ENCODE measurements at regions of chr14 and their contacts with region 1.

Region 1: GRCh38 chr14:53432378-53432802 is 279.3 kb upstream of the DDHD1 start:
- DNase-seq: no peak
- ATAC-seq: peak; percentile 87
- H3K4me3 ChIP-seq: no peak overlapping the region
- H3K27ac ChIP-seq: no peak overlapping the region
- H3K4me1 ChIP-seq: no peaks in the 10 kb centered on the region
- H3K27me3 ChIP-seq: no peaks in the 10 kb centered on the region
- CTCF ChIP-seq: peak; percentile 63 to 70 (median 70)
- EP300 ChIP-seq: no peak
- POLR2A ChIP-seq: no peak
- RAD21 ChIP-seq: peak; percentile 87

Region 2: DNA sequence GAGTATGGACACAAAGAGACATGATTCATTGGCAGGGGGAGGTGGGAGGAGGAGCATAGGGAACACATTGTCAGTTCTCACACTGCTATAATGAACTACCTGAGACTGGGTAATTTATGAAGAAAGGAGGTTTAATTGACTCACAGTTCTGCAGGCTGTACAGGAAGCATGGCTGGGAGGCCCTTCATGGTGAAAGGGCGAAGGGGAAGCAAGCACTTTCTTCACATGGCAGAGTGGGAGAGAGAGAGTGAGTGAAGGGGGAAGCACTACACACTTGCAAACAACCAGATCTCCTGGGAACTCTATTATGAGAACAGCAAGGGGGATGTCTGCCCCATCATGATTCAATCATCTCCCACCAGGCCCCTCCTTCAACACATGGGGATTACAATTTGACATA is 132.5 kb after region 1 on chr14:
- CTCF ChIA-PET with region 1: no interaction called
- POLR2A ChIA-PET with region 1: no interaction called
- RAD21 ChIA-PET with region 1: no interaction called
- SMC1A ChIA-PET with region 1: no interaction called
- in situ Hi-C with region 1: no loop called
- intact Hi-C with region 1: no loop called
- DNase-seq: no peak
- ATAC-seq: peak; percentile 42; the same call in 2 of the 3 replicates
- H3K4me3 ChIP-seq: no peak overlapping the region
- H3K27ac ChIP-seq: no peak overlapping the region
- H3K4me1 ChIP-seq: no peaks in the 10 kb centered on the region
- H3K27me3 ChIP-seq: no peaks in the 10 kb centered on the region
- CTCF ChIP-seq: no peak
- EP300 ChIP-seq: no peak
- POLR2A ChIP-seq: no peak
- RAD21 ChIP-seq: no peak

Region 3: GRCh38 chr14:53793790-53794505 is 361.6 kb after region 1 on chr14:
- CTCF ChIA-PET with region 1: no interaction called
- POLR2A ChIA-PET with region 1: no interaction called
- RAD21 ChIA-PET with region 1: no interaction called
- SMC1A ChIA-PET with region 1: no interaction called
- in situ Hi-C with region 1: no loop called
- intact Hi-C with region 1: loop called (anchors 10 kb)
- DNase-seq: no peak
- ATAC-seq: no peak
- H3K4me3 ChIP-seq: no peak overlapping the region
- H3K27ac ChIP-seq: no peak overlapping the region
- H3K4me1 ChIP-seq: no peaks in the 10 kb centered on the region
- H3K27me3 ChIP-seq: no peaks in the 10 kb centered on the region
- CTCF ChIP-seq: no peak
- EP300 ChIP-seq: no peak
- POLR2A ChIP-seq: no peak
- RAD21 ChIP-seq: no peak

Measured in GM12878 (cell line).